Endothelial cell of umbilical vein (primary cell): ENCODE measurements at regions of chr9 and their contacts with region 1.

Region 1: DNA sequence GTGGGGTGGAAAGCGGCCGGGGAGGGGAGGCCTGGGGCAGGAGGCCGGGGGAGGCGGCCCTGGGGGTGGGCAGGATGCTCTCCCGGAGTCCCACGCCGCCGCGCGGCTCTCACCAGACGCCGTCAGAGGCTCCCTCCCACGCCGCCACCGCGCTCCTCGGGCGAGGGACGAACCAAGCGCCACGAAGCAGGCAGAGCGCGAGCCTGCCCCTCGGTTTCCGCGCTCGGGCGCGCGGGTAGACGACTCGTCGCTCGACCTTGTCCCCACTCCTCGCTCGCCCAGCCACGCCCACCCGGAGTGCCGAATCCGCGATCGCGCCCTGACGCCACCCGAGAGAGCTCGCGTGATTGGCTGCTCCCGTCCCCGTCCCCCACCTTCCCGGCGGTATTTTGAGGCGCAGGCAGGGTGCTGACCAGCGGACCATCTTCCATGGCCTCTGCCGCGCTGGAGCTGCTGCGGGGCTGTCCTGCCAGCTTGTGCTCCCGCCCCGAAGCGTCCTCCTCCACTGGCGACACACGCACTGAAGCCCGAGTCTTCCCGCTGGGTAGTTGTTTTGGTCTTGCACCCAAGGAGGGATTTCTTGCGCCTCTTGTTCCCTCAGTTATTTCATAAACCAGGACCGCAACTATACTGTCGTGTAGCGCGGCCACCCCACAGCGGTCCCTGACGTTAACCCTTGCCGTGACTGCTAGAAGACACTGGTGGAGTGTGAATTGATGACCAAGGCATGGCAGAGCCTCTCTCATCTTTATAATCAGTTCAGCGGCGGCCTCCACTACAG is at the start of gene GNE:
- DNase-seq: peak; percentile 95
- H3K4me3 ChIP-seq: peak within 1 kb of the TSS; percentile 65 to 84 (median 66)
- H3K27ac ChIP-seq: peak within 1 kb of the TSS; percentile 44
- H3K4me1 ChIP-seq: peaks cover 4% of the 10 kb centered on the region
- H3K27me3 ChIP-seq: no peaks in the 10 kb centered on the region
- CTCF ChIP-seq: no peak
- POLR2A ChIP-seq: peak; percentile 83
- total RNA-seq, gene GNE: 11.4 and 12.3 TPM in 2 replicates

Region 2: DNA sequence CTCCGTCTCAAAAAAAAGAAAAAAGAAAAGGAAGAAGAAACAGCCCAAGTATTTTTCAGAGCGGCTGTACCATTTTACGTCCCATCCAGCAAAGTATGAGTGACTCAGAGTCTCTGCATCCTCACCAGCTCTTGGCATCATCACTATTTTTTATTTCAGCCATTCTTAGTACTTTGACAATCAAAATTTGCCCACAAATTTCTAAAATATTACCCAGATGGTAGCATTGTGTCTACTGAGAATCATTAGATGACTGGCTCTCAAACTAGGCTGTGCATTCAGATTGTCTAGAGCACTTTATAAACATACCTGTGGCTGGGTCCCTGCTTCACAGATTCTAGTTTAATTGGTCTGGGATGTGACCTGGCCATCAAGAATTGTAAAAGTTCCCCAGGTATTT is 292.7 kb after region 1 on chr9:
- CTCF ChIA-PET with region 1: no interaction called
- POLR2A ChIA-PET with region 1: no interaction called
- dilution Hi-C with region 1: no loop called
- intact Hi-C with region 1: loop called (anchors 10 kb)
- DNase-seq: no peak
- H3K4me3 ChIP-seq: no peak overlapping the region
- H3K27ac ChIP-seq: no peak overlapping the region
- H3K4me1 ChIP-seq: no peaks in the 10 kb centered on the region
- H3K27me3 ChIP-seq: peaks cover 10% of the 10 kb centered on the region in 2 experiments
- CTCF ChIP-seq: no peak
- POLR2A ChIP-seq: no peak